ENCODE measurements at regions of chr5 and their contacts with region 1.

Region 1: GRCh38 chr5:31581498-31582099 is 49.5 kb downstream of the C5orf22 start:
- DNase-seq: peak; percentile 39
- H3K4me3 ChIP-seq: no peak overlapping the region
- H3K27ac ChIP-seq: no peak overlapping the region
- H3K4me1 ChIP-seq: no peaks in the 10 kb centered on the region
- H3K27me3 ChIP-seq: no peaks in the 10 kb centered on the region; the same call in 1 of the 2 replicates
- CTCF ChIP-seq: peak; percentile 68
- EP300 ChIP-seq: no peak
- RAD21 ChIP-seq: peak; percentile 91

Region 2: DNA sequence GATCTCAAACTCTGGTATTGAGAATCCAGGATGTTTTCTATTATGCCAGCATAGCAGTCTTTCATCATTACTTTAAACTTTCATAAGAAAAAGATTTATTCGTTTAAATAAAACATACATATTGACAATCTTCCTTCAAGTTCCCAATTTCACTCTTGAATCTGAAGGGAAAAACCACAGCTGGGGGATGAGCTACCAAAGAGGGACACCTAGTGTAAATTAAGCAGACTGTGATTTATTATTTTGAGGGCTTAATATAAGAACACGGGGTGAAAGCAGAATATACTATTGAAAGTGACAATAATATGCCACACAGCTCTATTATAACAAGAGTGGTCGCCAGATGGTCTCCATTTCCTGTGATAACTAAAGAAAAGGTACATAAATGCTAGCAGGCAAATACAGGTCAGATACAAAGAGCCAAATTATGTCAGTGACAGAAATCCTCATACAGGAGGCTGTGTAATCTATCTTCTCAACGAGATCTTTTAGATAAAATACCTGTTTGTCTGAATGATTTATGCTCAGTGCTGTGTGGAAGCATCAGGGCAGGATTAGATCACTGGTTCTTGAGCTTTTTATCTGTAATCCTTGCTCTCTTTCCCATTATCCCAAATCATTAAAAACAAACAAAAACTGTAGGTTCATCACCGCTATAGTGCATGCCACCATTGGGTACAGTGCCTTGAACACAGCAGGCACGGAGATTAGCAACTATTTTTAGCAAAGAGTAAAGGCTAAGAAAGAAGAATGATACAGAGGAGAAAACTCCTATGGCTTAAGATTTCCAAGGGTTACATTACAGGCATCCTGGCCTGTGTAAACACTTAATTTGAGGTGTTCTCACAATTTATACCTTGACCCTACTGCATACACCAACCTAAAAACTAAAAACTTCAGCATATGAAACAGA is 166.3 kb before region 1 on chr5:
- CTCF ChIA-PET with region 1: no interaction called
- POLR2A ChIA-PET with region 1: no interaction called
- DNase-seq: peak; percentile 9
- H3K4me3 ChIP-seq: no peak overlapping the region
- H3K27ac ChIP-seq: peak overlapping the region in 1 of 2 experiments; percentile 59; a peak in 2 of 4 replicates
- H3K4me1 ChIP-seq: peaks cover 11 to 39% of the 10 kb centered on the region in 2 experiments
- H3K27me3 ChIP-seq: no peaks in the 10 kb centered on the region
- CTCF ChIP-seq: peak; percentile 46
- EP300 ChIP-seq: peak in 1 of 2 experiments; percentile 42; a peak in 2 of 4 replicates
- RAD21 ChIP-seq: peak; percentile 67

Region 3: DNA sequence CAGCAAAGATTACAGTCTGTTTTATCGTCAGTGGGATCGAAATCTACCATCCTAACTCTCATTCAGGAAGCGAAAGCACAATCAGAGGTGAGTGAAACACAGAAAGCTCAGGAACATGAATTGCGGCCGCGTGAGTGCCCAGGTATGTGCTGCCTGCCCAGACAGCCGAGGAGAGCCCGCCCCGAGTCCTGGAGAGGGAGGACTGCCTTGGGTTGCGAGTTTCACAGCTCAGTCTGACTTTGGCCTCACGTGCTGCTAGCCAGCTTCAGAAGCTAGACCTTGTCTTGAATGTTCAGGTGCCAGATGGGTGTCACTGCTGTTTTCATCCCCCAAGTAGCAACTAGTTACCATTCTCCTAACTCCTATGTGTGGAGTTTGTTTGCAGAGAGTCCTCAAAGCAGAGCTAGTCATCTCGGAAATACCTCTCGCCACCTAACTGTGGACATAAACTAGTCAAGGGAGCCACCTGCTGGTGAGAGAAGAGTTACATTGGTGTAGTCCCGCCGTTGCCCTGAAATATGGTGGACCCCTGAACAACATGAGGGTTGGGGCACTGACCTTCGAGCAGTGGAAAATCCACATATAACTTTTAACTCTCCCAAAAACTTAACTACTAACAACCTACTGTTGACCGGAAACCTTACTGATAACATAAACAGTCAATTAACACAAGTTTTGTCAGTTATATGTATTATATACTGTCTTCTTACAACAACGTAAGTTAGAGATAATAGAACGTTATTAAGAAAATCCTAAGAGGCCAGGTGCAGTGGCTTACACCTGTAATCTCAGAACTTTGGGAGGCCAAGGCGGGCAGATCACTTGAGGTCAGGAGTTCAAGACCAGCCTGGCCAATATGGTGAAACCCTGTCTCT is 511.6 kb after region 1 on chr5:
- CTCF ChIA-PET with region 1: interaction called, 10 read pairs
- POLR2A ChIA-PET with region 1: no interaction called
- DNase-seq: peak; percentile 81
- H3K4me3 ChIP-seq: peak overlapping the region in 1 of 2 experiments; percentile 50; a peak in 1 of 4 replicates
- H3K27ac ChIP-seq: no peak overlapping the region
- H3K4me1 ChIP-seq: peaks cover 0 to 4% of the 10 kb centered on the region in 2 experiments; a peak in 1 of 4 replicates
- H3K27me3 ChIP-seq: no peaks in the 10 kb centered on the region
- CTCF ChIP-seq: peak; percentile 77
- EP300 ChIP-seq: no peak
- RAD21 ChIP-seq: peak; percentile 89

Measured in SK-N-SH (cell line).